OCI-LY7 (cell line): ENCODE measurements at regions of chr12 and their contacts with region 1.

Region 1: GRCh38 chr12:14769969-14770495 is 33.2 kb downstream of the WBP11 start:
- DNase-seq: peak; percentile 95
- H3K4me3 ChIP-seq: peak overlapping the region; percentile 81
- H3K27ac ChIP-seq: peak overlapping the region; percentile 95
- H3K4me1 ChIP-seq: peaks cover 47% of the 10 kb centered on the region
- CTCF ChIP-seq: peak; percentile 80

Region 2: GRCh38 chr12:14278294-14278953 is 491.6 kb before region 1 on chr12:
- CTCF ChIA-PET with region 1: no interaction called
- POLR2A ChIA-PET with region 1: interaction called, 4 read pairs
- intact Hi-C with region 1: loop called (anchors 2 kb)
- DNase-seq: peak; percentile 79
- H3K4me3 ChIP-seq: peak overlapping the region; percentile 5
- H3K27ac ChIP-seq: peak overlapping the region; percentile 95
- H3K4me1 ChIP-seq: peaks cover 88% of the 10 kb centered on the region
- CTCF ChIP-seq: no peak

Region 3: GRCh38 chr12:14618983-14619382 is 151.0 kb before region 1 on chr12:
- CTCF ChIA-PET with region 1: interaction called, 4 read pairs
- POLR2A ChIA-PET with region 1: interaction called, 28 read pairs
- intact Hi-C with region 1: loop called (anchors 5 kb)
- DNase-seq: peak; percentile 65
- H3K4me3 ChIP-seq: no peak overlapping the region
- H3K27ac ChIP-seq: peak overlapping the region; percentile 52
- H3K4me1 ChIP-seq: peaks cover 66% of the 10 kb centered on the region
- CTCF ChIP-seq: peak; percentile 88

Region 4: DNA sequence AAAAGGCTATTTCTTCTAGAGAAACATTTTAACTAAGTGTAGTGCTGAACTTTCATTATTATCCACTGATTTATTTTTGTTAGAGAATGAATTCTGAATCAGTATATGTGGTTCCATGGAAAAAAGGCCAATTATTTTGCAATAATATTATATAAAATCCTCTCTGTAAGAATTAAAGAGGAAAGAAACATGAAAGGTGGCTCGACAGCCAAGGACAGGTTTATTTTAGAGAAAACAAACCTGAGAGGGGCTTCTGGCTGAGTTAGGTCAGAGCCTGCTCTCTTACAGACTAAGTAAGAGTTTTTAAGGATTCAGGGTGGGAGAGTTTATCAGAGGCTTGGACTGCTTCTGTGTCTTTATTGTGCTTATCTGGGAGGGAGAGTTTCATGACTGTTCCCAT is 27.0 kb before region 1 on chr12:
- CTCF ChIA-PET with region 1: no interaction called
- POLR2A ChIA-PET with region 1: no interaction called
- intact Hi-C with region 1: no loop called
- DNase-seq: no peak
- H3K4me3 ChIP-seq: no peak overlapping the region
- H3K27ac ChIP-seq: no peak overlapping the region
- H3K4me1 ChIP-seq: peaks cover 10% of the 10 kb centered on the region
- CTCF ChIP-seq: no peak

Region 5: GRCh38 chr12:14782756-14783155 is 12.7 kb after region 1 on chr12:
- CTCF ChIA-PET with region 1: interaction called, 5 read pairs
- POLR2A ChIA-PET with region 1: interaction called, 82 read pairs
- intact Hi-C with region 1: no loop called
- DNase-seq: no peak
- H3K4me3 ChIP-seq: no peak overlapping the region
- H3K27ac ChIP-seq: no peak overlapping the region
- H3K4me1 ChIP-seq: peaks cover 5% of the 10 kb centered on the region
- CTCF ChIP-seq: no peak

Region 6: DNA sequence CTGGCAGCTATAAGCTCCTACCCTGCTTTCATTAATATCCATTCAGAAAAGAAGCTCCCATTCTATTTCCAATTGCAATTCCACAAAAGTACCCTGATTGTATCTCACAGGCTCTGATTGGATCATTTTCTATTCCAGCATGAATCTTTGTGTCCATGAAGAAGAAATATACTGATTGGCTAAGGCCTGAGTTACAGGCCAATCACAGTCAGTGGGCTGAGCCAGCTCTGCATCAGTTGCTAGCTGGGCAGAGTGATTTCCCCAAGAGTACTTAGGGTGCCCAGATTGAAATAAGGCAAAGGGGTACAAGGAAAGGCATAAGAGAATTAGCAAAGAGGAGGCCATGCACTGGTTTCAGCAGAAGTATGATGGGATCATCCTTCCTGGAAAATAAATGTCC is 58.9 kb after region 1 on chr12:
- CTCF ChIA-PET with region 1: no interaction called
- POLR2A ChIA-PET with region 1: no interaction called
- intact Hi-C with region 1: no loop called
- DNase-seq: no peak
- H3K4me3 ChIP-seq: no peak overlapping the region
- H3K27ac ChIP-seq: no peak overlapping the region
- H3K4me1 ChIP-seq: no peaks in the 10 kb centered on the region
- CTCF ChIP-seq: no peak

Region 7: GRCh38 chr12:14884458-14884878 is 114.4 kb after region 1 on chr12:
- CTCF ChIA-PET with region 1: no interaction called
- POLR2A ChIA-PET with region 1: interaction called, 4 read pairs
- intact Hi-C with region 1: loop called (anchors 5 kb)
- DNase-seq: peak; percentile 85
- H3K4me3 ChIP-seq: peak overlapping the region; percentile 40
- H3K27ac ChIP-seq: peak overlapping the region; percentile 41
- H3K4me1 ChIP-seq: peaks cover 54% of the 10 kb centered on the region
- CTCF ChIP-seq: no peak

Region 8: GRCh38 chr12:15575671-15576541 is 805.9 kb after region 1 on chr12:
- CTCF ChIA-PET with region 1: no interaction called
- POLR2A ChIA-PET with region 1: interaction called, 3 read pairs
- intact Hi-C with region 1: loop called (anchors 5 kb)
- DNase-seq: no peak
- H3K4me3 ChIP-seq: no peak overlapping the region
- H3K27ac ChIP-seq: no peak overlapping the region
- H3K4me1 ChIP-seq: peaks cover 10% of the 10 kb centered on the region
- CTCF ChIP-seq: no peak